CD8-positive, alpha-beta T cell (primary cell): ENCODE measurements at regions of chr2 and their contacts with region 1.

Region 1: GRCh38 chr2:28392297-28393113 is at the start of gene FOSL2:
- DNase-seq: peak; percentile 83 to 99 (median 92)
- ATAC-seq: peak; percentile 69
- H3K4me3 ChIP-seq: peak within 1 kb of the TSS; percentile 69 to 78
- H3K4me3 Mint-ChIP-seq: peak within 1 kb of the TSS; percentile 86
- H3K27ac ChIP-seq: peak within 1 kb of the TSS; percentile 85 to 95
- H3K27ac Mint-ChIP-seq: peak within 1 kb of the TSS; percentile 97
- H3K4me1 ChIP-seq: peaks cover 36% of the 10 kb centered on the region
- H3K4me1 Mint-ChIP-seq: peaks cover 25% of the 10 kb centered on the region
- H3K27me3 ChIP-seq: no peaks in the 10 kb centered on the region
- H3K27me3 Mint-ChIP-seq: no peaks in the 10 kb centered on the region
- CTCF ChIP-seq: no peak
- total RNA-seq, gene FOSL2: 359 to 360 TPM

Region 2: DNA sequence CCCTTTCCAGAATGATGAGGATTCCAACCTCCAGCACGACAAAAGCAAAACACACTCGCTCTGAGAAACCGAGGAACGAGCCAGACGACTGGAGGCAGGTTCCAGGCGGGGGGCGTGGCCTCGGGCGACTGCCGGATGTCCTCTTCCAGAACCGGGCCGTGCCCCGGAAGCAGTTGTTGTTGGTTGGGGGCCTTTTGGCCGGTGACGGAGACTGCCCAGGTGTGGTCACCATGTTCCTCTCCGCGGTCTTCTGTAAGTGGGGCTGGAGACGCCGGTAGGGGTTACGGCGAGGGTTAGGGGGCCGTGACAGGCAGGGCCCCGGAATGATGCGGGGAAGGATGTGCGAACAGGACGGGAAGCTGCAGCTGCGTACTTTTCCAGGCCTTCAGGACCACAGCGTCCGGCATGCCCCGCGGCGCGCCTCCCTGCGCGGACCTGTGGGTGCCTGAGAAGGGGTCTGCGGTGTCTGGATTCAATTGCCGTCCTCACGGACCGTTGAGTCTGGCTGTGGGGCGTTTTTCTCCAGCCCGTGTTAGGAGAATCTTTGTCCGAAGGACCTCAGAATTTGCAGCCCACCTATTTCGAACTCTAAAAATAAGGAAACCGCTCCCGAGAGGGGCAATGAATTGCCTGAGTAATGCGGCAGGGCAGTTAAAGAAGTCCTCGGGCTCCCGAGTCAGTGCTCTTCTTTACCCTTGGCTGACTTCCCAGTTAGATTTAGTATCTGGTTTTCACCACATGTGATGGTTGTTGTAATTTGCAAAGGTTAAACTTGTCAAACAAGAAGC is 620.8 kb before region 1 on chr2 and contains the start of gene MRPL33:
- CTCF ChIA-PET with region 1: no interaction called
- POLR2A ChIA-PET with region 1: no interaction called
- intact Hi-C with region 1: loop called (anchors 1 to 5 kb)
- DNase-seq: peak; percentile 82 to 94 (median 92)
- ATAC-seq: peak; percentile 89
- H3K4me3 ChIP-seq: peak within 1 kb of the TSS; percentile 93 to 99
- H3K4me3 Mint-ChIP-seq: peak within 1 kb of the TSS; percentile 100
- H3K27ac ChIP-seq: peak within 1 kb of the TSS; percentile 93 to 96
- H3K27ac Mint-ChIP-seq: peak within 1 kb of the TSS; percentile 100
- H3K4me1 ChIP-seq: peaks cover 27% of the 10 kb centered on the region
- H3K4me1 Mint-ChIP-seq: peaks cover 51% of the 10 kb centered on the region
- H3K27me3 ChIP-seq: no peaks in the 10 kb centered on the region
- H3K27me3 Mint-ChIP-seq: peaks cover 4% of the 10 kb centered on the region
- CTCF ChIP-seq: no peak
- total RNA-seq, gene MRPL33: 35.8 to 39.0 TPM

Region 3: GRCh38 chr2:28338046-28338817 is 54.3 kb before region 1 on chr2:
- CTCF ChIA-PET with region 1: no interaction called
- POLR2A ChIA-PET with region 1: no interaction called
- intact Hi-C with region 1: no loop called
- DNase-seq: no peak
- ATAC-seq: no peak
- H3K4me3 ChIP-seq: no peak overlapping the region
- H3K4me3 Mint-ChIP-seq: no peak overlapping the region
- H3K27ac ChIP-seq: no peak overlapping the region
- H3K27ac Mint-ChIP-seq: no peak overlapping the region
- H3K4me1 ChIP-seq: no peaks in the 10 kb centered on the region
- H3K4me1 Mint-ChIP-seq: peaks cover 4% of the 10 kb centered on the region
- H3K27me3 ChIP-seq: no peaks in the 10 kb centered on the region
- H3K27me3 Mint-ChIP-seq: no peaks in the 10 kb centered on the region
- CTCF ChIP-seq: no peak

Region 4: GRCh38 chr2:28359222-28360065 is 33.1 kb before region 1 on chr2:
- CTCF ChIA-PET with region 1: no interaction called
- POLR2A ChIA-PET with region 1: interaction called, 9 read pairs
- intact Hi-C with region 1: loop called (anchors 1 kb)
- DNase-seq: peak; percentile 69 to 94 (median 81)
- ATAC-seq: peak; percentile 82
- H3K4me3 ChIP-seq: peak overlapping the region; percentile 23 to 25
- H3K4me3 Mint-ChIP-seq: peak overlapping the region; percentile 76
- H3K27ac ChIP-seq: peak overlapping the region; percentile 21 to 94
- H3K27ac Mint-ChIP-seq: peak overlapping the region; percentile 93
- H3K4me1 ChIP-seq: peaks cover 49% of the 10 kb centered on the region
- H3K4me1 Mint-ChIP-seq: peaks cover 42% of the 10 kb centered on the region
- H3K27me3 ChIP-seq: no peaks in the 10 kb centered on the region
- H3K27me3 Mint-ChIP-seq: peaks cover 4% of the 10 kb centered on the region
- CTCF ChIP-seq: no peak

Region 5: DNA sequence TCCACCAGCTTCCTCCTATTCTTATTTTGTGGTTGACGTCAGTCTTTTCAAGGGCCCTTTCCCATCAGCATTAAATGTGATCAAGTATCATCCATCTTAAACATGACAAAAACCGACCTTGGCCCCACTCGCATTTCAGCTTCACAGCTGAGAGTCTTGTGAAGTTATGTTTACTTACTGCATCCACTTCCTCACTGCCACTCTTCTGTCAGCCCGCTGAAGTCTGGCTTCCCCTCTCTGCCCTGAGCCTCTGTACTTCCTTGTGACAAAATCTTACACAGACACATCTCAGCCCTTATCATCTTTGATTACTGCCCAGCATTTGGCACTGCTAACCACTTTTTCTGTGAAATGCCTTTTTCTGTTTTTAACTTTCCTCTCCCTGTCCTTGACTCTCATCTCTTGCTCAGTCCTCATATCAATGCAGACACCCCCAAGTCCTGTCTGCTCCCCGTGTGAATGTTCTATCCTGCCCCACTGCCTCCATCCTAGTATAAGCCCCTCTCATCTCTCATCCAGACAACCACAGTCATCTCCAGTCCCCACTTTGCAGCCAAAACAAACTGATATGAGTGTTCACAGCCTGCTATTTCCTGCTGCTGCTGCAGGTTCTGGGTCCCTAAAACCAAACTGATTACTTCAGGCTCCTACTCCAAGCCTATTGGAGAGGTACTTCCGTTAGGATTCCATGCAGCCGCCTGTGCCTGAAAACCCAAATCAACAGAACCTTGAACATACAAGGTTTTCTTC is 31.5 kb after region 1 on chr2:
- CTCF ChIA-PET with region 1: interaction called, 7 read pairs
- POLR2A ChIA-PET with region 1: interaction called, 10 read pairs
- intact Hi-C with region 1: loop called in 1 of 2 experiments (anchors 1 kb)
- DNase-seq: peak in 8 of 9 experiments; percentile 45 to 82 (median 66)
- ATAC-seq: peak; percentile 82
- H3K4me3 ChIP-seq: peak overlapping the region; percentile 18 to 38
- H3K4me3 Mint-ChIP-seq: peak overlapping the region; percentile 80
- H3K27ac ChIP-seq: peak overlapping the region; percentile 63 to 91
- H3K27ac Mint-ChIP-seq: peak overlapping the region; percentile 98
- H3K4me1 ChIP-seq: peaks cover 32% of the 10 kb centered on the region
- H3K4me1 Mint-ChIP-seq: peaks cover 41% of the 10 kb centered on the region
- H3K27me3 ChIP-seq: no peaks in the 10 kb centered on the region
- H3K27me3 Mint-ChIP-seq: no peaks in the 10 kb centered on the region
- CTCF ChIP-seq: no peak

Region 6: DNA sequence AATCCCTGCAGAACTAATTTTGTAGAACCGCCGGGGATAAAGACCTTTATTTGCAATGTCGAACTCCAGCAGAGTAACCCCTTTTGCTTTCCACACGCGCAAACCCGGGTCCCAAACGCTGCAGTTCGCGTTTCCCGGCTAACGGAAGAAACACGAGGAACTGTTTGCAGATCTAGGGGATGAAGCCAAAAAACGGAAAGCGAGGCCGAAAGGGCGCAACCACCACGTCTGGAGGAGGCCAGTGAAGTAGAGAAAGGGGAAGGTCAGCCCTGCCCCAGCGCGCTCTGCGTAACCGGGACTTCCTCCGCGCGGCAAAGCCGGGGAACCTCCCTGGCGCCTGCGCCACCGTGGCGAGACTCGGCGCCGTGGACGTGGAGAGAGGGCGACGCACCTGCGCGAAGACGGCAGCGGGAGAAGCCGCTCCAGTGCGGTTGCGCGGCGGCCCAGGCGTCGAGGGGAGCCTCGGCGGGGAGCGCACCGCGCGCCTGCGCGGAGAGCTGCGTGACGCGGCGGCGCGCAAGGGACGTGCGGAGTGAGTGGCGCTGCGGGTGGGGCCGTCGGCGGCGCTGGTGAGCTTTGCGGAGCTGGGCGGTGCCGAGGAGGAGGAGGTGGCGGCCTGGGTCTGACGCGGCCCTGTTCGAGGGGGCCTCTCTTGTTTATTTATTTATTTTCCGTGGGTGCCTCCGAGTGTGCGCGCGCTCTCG is 358.9 kb after region 1 on chr2 and contains the start of gene PPP1CB:
- CTCF ChIA-PET with region 1: no interaction called
- POLR2A ChIA-PET with region 1: no interaction called
- intact Hi-C with region 1: loop called (anchors 1 to 2 kb)
- DNase-seq: peak; percentile 93 to 100 (median 95)
- ATAC-seq: peak; percentile 85
- H3K4me3 ChIP-seq: peak within 1 kb of the TSS; percentile 63 to 88
- H3K4me3 Mint-ChIP-seq: peak within 1 kb of the TSS; percentile 93
- H3K27ac ChIP-seq: peak within 1 kb of the TSS; percentile 86 to 97
- H3K27ac Mint-ChIP-seq: peak within 1 kb of the TSS; percentile 96
- H3K4me1 ChIP-seq: peaks cover 46% of the 10 kb centered on the region
- H3K4me1 Mint-ChIP-seq: peaks cover 65% of the 10 kb centered on the region
- H3K27me3 ChIP-seq: no peaks in the 10 kb centered on the region
- H3K27me3 Mint-ChIP-seq: no peaks in the 10 kb centered on the region
- CTCF ChIP-seq: no peak
- total RNA-seq, gene PPP1CB: 331 to 334 TPM